ENCODE measurements at regions of chr12 and their contacts with region 1.

Region 1: DNA sequence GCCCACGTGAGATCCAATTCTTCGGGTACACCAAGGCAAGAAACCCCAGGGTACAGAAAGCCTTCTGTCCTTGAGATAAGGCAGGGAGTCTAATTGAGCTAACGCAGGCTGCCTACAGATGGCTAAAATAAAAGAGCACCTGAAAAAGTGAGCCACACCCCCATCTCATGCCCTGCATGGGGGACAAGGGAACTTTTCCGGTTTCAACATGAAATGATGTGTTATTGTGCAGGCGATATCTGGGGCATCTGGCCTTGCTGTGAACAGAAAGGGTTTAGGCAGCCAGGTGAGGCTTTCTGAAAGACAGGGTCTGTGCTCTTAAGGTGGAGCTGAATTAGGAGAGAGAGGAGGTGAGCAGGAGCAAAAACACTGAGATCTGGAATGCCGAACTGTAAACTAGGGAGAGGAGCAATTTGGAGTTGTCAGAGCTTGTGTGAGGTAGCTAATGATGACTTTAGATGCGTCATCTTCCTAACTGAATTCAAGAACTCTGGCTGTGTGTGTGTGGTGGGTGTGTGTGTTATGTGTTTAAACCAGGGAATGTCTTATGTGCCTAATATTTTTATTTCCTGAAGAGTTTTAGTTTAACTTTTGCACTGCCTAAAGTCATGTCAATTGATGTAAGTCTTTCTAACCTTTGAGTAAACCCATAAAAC is 20.1 kb upstream of the LDHB start:
- DNase-seq: peak; percentile 37 to 57 (median 45)
- H3K4me3 ChIP-seq: peak overlapping the region; percentile 16 to 49
- H3K4me3 Mint-ChIP-seq: peak overlapping the region; percentile 67 to 91 (median 81)
- H3K27ac ChIP-seq: peak overlapping the region; percentile 45
- H3K27ac Mint-ChIP-seq: peak overlapping the region; percentile 81 to 97 (median 85)
- H3K4me1 ChIP-seq: peaks cover 58% of the 10 kb centered on the region
- H3K4me1 Mint-ChIP-seq: peaks cover 43 to 62% (median 54%) of the 10 kb centered on the region in 4 donors
- H3K27me3 ChIP-seq: no peaks in the 10 kb centered on the region
- H3K27me3 Mint-ChIP-seq: no peaks in the 10 kb centered on the region

Region 2: DNA sequence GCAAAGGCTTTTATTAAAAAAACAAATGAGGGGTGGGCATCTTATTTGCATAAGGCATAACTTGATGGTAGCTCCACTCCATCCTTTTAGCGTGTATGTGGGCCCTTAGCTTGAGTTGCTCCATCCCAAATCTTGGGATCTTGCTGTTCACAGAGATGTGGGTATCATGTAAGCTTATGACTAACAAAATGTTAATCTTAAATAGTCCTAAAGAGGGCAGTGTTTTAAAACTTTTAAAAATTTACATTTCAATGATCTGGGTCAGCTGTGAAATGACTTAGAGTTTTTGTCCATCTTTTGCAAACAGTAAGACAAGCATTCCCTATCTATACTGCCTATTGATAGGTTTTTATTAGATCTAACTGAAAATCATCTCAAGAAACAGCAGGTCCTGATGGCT is 429.1 kb before region 1 on chr12:
- CTCF ChIA-PET with region 1: no interaction called
- POLR2A ChIA-PET with region 1: no interaction called
- intact Hi-C with region 1: loop called (anchors 2 kb)
- DNase-seq: no peak
- H3K4me3 ChIP-seq: no peak overlapping the region
- H3K4me3 Mint-ChIP-seq: no peak overlapping the region
- H3K27ac ChIP-seq: no peak overlapping the region
- H3K27ac Mint-ChIP-seq: no peak overlapping the region
- H3K4me1 ChIP-seq: no peaks in the 10 kb centered on the region
- H3K4me1 Mint-ChIP-seq: no peaks in the 10 kb centered on the region
- H3K27me3 ChIP-seq: no peaks in the 10 kb centered on the region
- H3K27me3 Mint-ChIP-seq: peaks cover 0 to 1% of the 10 kb centered on the region in 2 donors

Region 3: DNA sequence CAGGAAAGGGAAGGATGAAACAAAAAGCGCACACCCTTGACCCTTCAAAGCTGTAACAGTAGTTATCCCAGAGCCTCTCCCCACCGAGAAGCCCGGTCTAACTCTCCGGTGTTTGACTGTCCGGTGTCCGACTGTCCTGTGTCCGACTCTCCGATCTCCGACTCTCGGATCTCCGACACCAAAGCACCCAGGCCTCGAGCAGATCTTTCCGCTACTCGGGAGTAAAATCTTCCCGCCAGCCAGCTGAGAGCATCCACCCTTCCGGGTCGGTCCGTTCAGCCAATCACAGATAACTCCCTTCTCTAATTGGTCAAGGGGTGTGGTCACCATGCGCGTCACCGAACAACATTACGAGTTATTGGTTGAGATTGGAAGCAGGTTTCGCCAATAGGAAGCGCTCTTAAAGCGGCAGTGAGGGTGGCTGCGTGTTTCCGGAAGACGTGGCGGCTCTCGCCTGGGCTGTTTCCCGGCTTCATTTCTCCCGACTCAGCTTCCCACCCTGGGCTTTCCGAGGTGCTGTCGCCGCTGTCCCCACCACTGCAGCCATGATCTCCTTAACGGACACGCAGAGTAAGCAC is 176.3 kb before region 1 on chr12 and contains the starts of genes GOLT1B and RECQL:
- CTCF ChIA-PET with region 1: interaction called, 5 read pairs
- POLR2A ChIA-PET with region 1: interaction called, 7 read pairs
- intact Hi-C with region 1: loop called (anchors 1 kb)
- DNase-seq: peak; percentile 93 to 96 (median 95)
- H3K4me3 ChIP-seq: peak within 1 kb of the TSS; percentile 77 to 93
- H3K4me3 Mint-ChIP-seq: no peak within 1 kb of the TSS
- H3K27ac ChIP-seq: peak within 1 kb of the TSS; percentile 78
- H3K27ac Mint-ChIP-seq: peak within 1 kb of the TSS in 1 of 7 donors; percentile 71
- H3K4me1 ChIP-seq: peaks cover 64% of the 10 kb centered on the region
- H3K4me1 Mint-ChIP-seq: peaks cover 28 to 61% (median 46%) of the 10 kb centered on the region in 4 donors
- H3K27me3 ChIP-seq: no peaks in the 10 kb centered on the region
- H3K27me3 Mint-ChIP-seq: no peaks in the 10 kb centered on the region
- total RNA-seq, gene GOLT1B: 33.0 to 39.1 TPM
- total RNA-seq, gene RECQL: 64.0 to 67.8 TPM

Region 4: DNA sequence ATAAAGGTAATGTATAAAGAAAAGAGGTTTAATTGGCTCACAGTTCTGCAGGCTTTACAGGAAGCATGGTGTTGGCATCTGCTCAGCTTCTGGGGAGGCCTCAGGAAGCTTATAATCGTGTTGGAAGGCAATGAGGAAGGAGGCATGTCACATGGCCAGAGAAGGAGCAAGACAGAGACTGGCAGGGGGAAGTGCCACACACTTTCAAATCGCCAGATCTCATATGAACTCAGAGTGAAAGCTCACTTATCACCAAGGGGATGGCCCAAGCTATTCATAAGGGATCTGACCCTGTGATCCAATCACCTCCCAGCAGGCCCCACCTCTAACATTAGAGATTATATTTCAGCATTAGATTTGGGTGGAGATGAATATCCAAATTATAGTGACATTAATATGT is 46.4 kb before region 1 on chr12:
- CTCF ChIA-PET with region 1: interaction called, 5 read pairs
- POLR2A ChIA-PET with region 1: interaction called, 10 read pairs
- intact Hi-C with region 1: no loop called
- DNase-seq: no peak
- H3K4me3 ChIP-seq: no peak overlapping the region
- H3K4me3 Mint-ChIP-seq: no peak overlapping the region
- H3K27ac ChIP-seq: no peak overlapping the region
- H3K27ac Mint-ChIP-seq: peak overlapping the region in 6 of 7 donors; percentile 3 to 83 (median 57)
- H3K4me1 ChIP-seq: no peaks in the 10 kb centered on the region
- H3K4me1 Mint-ChIP-seq: peaks cover 5 to 16% (median 11%) of the 10 kb centered on the region in 4 donors
- H3K27me3 ChIP-seq: no peaks in the 10 kb centered on the region
- H3K27me3 Mint-ChIP-seq: no peaks in the 10 kb centered on the region

Region 5: DNA sequence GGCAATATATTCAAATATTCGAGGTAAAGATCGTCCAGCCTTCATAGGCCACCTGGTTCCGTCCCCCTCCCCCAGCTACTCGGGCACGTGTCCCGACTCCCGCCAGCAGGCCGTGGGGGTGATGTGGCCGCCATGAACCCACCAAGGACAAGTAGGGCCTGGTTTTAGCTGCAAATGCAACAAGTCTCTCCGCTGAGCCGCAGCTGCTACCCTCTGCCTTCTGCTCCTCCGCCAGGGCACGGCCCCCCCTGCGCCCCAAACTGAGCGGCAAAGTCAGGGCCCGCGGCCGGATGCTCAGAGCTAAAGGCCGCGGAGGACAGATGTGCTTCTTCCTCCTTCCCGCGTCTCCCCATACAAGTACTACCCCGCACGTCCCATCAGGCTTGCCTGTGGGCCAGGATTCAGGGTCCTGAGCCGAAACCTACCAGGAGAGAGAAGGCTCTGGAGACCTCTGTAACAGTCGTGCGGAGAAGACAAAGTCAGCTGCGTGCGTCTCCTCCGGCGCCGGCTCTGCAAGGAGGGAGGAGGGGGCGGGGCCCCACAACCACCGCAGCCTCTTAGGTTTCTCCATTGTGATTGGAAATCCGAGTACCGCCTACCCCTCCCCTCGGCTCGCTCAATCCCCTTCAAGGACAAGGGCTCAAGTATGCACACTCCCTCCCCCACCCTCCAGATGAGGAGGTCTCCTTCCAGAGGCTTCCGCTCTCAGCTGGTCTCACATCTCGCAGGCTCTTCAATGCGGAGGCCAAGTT is 20.2 kb before region 1 on chr12 and contains the start of gene LDHB:
- CTCF ChIA-PET with region 1: interaction called, 79 read pairs
- POLR2A ChIA-PET with region 1: interaction called, 245 read pairs
- intact Hi-C with region 1: loop called (anchors 1 kb)
- DNase-seq: peak; percentile 88 to 97 (median 90)
- H3K4me3 ChIP-seq: peak within 1 kb of the TSS; percentile 85 to 89
- H3K4me3 Mint-ChIP-seq: peak within 1 kb of the TSS; percentile 93 to 100 (median 100)
- H3K27ac ChIP-seq: peak within 1 kb of the TSS; percentile 71
- H3K27ac Mint-ChIP-seq: peak within 1 kb of the TSS; percentile 94 to 99 (median 98)
- H3K4me1 ChIP-seq: peaks cover 59% of the 10 kb centered on the region
- H3K4me1 Mint-ChIP-seq: peaks cover 33 to 84% (median 51%) of the 10 kb centered on the region in 4 donors
- H3K27me3 ChIP-seq: no peaks in the 10 kb centered on the region
- H3K27me3 Mint-ChIP-seq: no peaks in the 10 kb centered on the region
- total RNA-seq, gene LDHB: 1,100 to 1,180 TPM

Region 6: DNA sequence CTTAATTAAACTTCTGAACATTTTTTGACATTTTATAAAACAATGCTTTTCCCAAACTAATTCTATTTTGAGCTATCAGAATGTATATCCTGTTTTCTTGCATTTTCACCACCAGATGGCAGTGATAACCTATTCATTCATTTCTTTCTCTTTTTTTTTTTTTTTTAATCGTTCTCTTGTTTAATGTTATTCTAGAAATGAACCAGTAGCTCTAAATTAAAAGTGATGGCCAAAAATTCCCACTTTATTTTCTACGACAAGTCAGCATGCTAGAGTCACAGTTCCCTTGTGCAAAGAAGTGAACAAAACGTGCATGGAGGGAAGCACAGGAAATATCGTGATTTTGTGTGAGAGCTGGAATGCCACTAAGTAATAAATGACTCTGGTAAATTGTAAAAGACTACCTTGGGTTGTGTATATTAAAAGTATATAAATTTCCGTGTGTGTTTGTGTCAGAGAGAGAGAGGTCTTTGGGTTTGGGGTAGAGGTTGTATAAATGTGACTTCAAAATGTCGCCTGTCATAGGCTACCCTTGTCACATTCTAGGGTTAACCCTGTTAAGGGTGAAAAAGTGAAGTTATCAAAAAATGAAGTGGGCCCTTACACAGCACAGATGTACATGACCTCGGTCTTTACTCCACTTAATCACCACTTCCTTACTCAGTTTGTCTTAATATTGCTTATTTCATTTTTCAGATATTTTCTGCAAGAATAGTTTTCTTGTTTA is 20.3 kb after region 1 on chr12:
- CTCF ChIA-PET with region 1: interaction called, 61 read pairs
- POLR2A ChIA-PET with region 1: interaction called, 5 read pairs
- intact Hi-C with region 1: no loop called
- DNase-seq: peak in 4 of 5 donors; percentile 43 to 46 (median 44)
- H3K4me3 ChIP-seq: no peak overlapping the region
- H3K4me3 Mint-ChIP-seq: peak overlapping the region in 6 of 8 donors; percentile 19 to 68 (median 27)
- H3K27ac ChIP-seq: no peak overlapping the region
- H3K27ac Mint-ChIP-seq: no peak overlapping the region
- H3K4me1 ChIP-seq: peaks cover 11% of the 10 kb centered on the region
- H3K4me1 Mint-ChIP-seq: peaks cover 0 to 16% (median 10%) of the 10 kb centered on the region in 4 donors
- H3K27me3 ChIP-seq: no peaks in the 10 kb centered on the region
- H3K27me3 Mint-ChIP-seq: no peaks in the 10 kb centered on the region

Region 7: GRCh38 chr12:21751517-21751916 is 73.8 kb after region 1 on chr12:
- CTCF ChIA-PET with region 1: no interaction called
- POLR2A ChIA-PET with region 1: no interaction called
- intact Hi-C with region 1: no loop called
- DNase-seq: no peak
- H3K4me3 ChIP-seq: no peak overlapping the region
- H3K4me3 Mint-ChIP-seq: no peak overlapping the region
- H3K27ac ChIP-seq: no peak overlapping the region
- H3K27ac Mint-ChIP-seq: no peak overlapping the region
- H3K4me1 ChIP-seq: no peaks in the 10 kb centered on the region
- H3K4me1 Mint-ChIP-seq: no peaks in the 10 kb centered on the region
- H3K27me3 ChIP-seq: no peaks in the 10 kb centered on the region
- H3K27me3 Mint-ChIP-seq: peaks cover 16 to 22% of the 10 kb centered on the region in 2 donors

Measured in CD4-positive, alpha-beta memory T cell (primary cell).